IMR-90 (cell line): ENCODE measurements at regions of chrX and their contacts with region 1.

Region 1: DNA sequence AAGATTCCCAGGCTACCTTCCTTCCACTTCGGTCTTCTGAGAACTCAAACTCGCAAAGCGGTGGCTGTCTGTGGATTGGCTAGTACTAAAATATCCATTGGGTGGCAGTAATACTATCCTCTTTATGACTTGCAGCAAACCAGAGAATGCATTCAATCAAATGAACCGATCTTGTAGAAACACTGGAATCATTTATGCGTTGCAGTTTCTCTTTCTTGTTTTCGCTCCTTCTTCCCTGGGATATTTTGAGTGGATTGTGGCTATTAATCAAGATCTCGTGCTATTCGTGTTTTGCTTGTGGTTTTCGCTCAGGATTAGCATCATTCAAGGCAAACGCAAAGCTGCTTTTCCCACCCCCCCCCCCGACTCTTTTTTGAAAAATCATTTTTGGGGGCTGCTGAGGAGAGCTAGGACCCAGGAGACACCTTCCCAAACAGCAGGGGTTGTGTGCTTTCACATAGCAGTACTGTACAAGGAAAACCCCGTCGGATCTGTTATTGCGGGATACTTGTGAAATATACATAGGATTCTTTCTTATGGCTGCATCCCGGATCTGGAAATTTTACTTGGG is at the start of gene IL1RAPL1:
- DNase-seq: peak; percentile 81
- ATAC-seq: peak; percentile 77
- H3K4me3 ChIP-seq: peak within 1 kb of the TSS; percentile 63
- H3K27ac ChIP-seq: peak within 1 kb of the TSS; percentile 58; the same call in 1 of the 2 replicates
- H3K4me1 ChIP-seq: no peaks in the 10 kb centered on the region
- H3K27me3 ChIP-seq: no peaks in the 10 kb centered on the region
- CTCF ChIP-seq: peak; percentile 39
- POLR2A ChIP-seq: no peak
- RAD21 ChIP-seq: peak; percentile 36
- total RNA-seq, gene IL1RAPL1: 9.0 and 12.5 TPM in 2 replicates

Region 2: GRCh38 chrX:27680726-27681125 is 906.3 kb before region 1 on chrX:
- CTCF ChIA-PET with region 1: no interaction called
- POLR2A ChIA-PET with region 1: no interaction called
- dilution Hi-C with region 1: no loop called
- in situ Hi-C with region 1: no loop called
- intact Hi-C with region 1: loop called (anchors 2 kb)
- DNase-seq: peak; percentile 56
- ATAC-seq: peak; percentile 85
- H3K4me3 ChIP-seq: no peak overlapping the region
- H3K27ac ChIP-seq: no peak overlapping the region
- H3K4me1 ChIP-seq: no peaks in the 10 kb centered on the region
- H3K27me3 ChIP-seq: no peaks in the 10 kb centered on the region
- CTCF ChIP-seq: no peak
- POLR2A ChIP-seq: no peak
- RAD21 ChIP-seq: no peak

Region 3: GRCh38 chrX:28223991-28224390 is 363.1 kb before region 1 on chrX:
- CTCF ChIA-PET with region 1: no interaction called
- POLR2A ChIA-PET with region 1: no interaction called
- dilution Hi-C with region 1: no loop called
- in situ Hi-C with region 1: no loop called
- intact Hi-C with region 1: loop called (anchors 5 kb)
- DNase-seq: no peak
- ATAC-seq: no peak
- H3K4me3 ChIP-seq: no peak overlapping the region
- H3K27ac ChIP-seq: no peak overlapping the region
- H3K4me1 ChIP-seq: no peaks in the 10 kb centered on the region
- H3K27me3 ChIP-seq: no peaks in the 10 kb centered on the region
- CTCF ChIP-seq: no peak
- POLR2A ChIP-seq: no peak
- RAD21 ChIP-seq: no peak

Region 4: DNA sequence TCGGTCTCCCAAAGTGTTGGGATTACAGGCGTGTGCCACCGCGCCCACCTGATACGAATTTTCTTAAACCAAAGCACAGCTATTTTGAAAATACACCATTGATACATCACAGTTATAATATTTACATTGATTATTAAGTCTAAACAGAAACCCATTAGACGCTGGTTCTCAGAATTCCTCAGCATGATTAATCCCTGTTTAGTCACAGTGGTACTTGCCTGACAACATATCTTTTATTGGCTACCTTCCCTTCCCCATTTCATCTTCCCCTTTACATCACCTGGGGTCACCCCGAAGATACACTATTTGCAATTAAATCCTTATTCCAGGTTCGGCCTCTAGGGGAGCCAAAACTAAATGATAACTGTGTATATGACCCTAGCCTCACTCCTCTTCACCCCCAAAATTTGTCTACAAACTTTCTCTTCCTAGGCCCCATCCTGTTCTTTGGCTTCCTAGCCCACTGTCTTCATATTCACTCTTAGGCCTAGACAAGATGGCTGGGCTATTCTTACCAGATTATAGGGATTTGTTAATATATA is 36.7 kb before region 1 on chrX:
- CTCF ChIA-PET with region 1: no interaction called
- POLR2A ChIA-PET with region 1: no interaction called
- dilution Hi-C with region 1: no loop called
- in situ Hi-C with region 1: no loop called
- intact Hi-C with region 1: no loop called
- DNase-seq: no peak
- ATAC-seq: no peak
- H3K4me3 ChIP-seq: no peak overlapping the region
- H3K27ac ChIP-seq: no peak overlapping the region
- H3K4me1 ChIP-seq: no peaks in the 10 kb centered on the region
- H3K27me3 ChIP-seq: no peaks in the 10 kb centered on the region
- CTCF ChIP-seq: no peak
- POLR2A ChIP-seq: no peak
- RAD21 ChIP-seq: no peak

Region 5: DNA sequence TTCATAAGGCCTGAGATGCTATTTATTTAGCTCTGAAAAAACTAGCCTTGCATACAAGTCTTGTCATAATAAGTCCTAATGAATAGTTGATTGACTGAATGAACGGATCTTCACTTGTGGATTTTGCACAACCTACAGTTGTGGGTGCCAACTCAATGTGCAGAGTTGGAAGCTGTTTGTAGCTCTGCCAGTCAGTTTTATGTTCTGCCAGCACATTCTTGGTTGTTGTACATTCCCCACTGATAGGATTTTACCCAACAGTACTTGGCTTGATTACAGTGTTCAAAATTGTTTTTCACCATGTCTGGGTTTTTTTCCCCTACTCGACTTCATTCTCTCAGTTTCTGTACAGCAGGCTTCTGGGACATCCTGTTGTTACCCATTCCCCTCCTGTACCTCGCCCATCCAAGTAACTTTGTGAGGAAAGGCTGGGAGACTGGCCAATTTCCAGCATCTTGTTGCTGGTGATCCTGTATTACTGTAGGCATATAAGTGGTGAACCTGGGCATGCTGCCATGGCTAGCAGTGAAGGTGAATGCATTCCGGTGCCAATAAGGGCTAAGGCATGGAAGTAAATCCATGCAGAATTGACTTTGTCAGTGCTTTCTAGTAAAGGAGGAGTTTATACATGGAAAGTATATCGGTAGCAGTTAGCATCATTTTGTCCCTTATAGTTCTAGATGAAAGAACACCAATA is 23.0 kb after region 1 on chrX:
- CTCF ChIA-PET with region 1: no interaction called
- POLR2A ChIA-PET with region 1: no interaction called
- dilution Hi-C with region 1: no loop called
- in situ Hi-C with region 1: no loop called
- intact Hi-C with region 1: no loop called
- DNase-seq: no peak
- ATAC-seq: no peak
- H3K4me3 ChIP-seq: no peak overlapping the region
- H3K27ac ChIP-seq: no peak overlapping the region
- H3K4me1 ChIP-seq: no peaks in the 10 kb centered on the region
- H3K27me3 ChIP-seq: no peaks in the 10 kb centered on the region
- CTCF ChIP-seq: no peak
- POLR2A ChIP-seq: no peak
- RAD21 ChIP-seq: no peak

Region 6: DNA sequence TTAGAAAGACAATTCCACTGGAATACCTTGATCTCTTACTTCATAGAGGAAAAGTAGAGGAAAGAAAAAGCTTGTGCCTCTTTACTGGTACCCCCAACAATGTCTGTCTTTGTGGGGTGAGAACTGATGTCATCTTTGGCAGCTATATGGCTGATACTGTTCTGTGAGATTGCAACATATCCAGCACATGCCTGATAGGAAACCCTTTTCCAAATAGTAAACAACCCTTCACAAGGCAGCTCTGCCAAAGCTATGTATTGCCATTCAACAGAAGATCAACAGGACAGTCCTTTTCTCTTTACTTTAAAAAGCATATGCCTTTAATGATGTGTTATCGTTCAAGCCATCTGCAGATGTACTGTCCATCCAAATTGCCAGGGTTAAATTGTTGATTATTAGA is 106.0 kb after region 1 on chrX:
- CTCF ChIA-PET with region 1: no interaction called
- POLR2A ChIA-PET with region 1: no interaction called
- dilution Hi-C with region 1: no loop called
- in situ Hi-C with region 1: no loop called
- intact Hi-C with region 1: no loop called
- DNase-seq: no peak
- ATAC-seq: no peak
- H3K4me3 ChIP-seq: no peak overlapping the region
- H3K27ac ChIP-seq: no peak overlapping the region
- H3K4me1 ChIP-seq: no peaks in the 10 kb centered on the region
- H3K27me3 ChIP-seq: no peaks in the 10 kb centered on the region
- CTCF ChIP-seq: no peak
- POLR2A ChIP-seq: no peak
- RAD21 ChIP-seq: no peak

Region 7: GRCh38 chrX:28802625-28803024 is 215.6 kb after region 1 on chrX:
- CTCF ChIA-PET with region 1: no interaction called
- POLR2A ChIA-PET with region 1: no interaction called
- dilution Hi-C with region 1: no loop called
- in situ Hi-C with region 1: no loop called
- intact Hi-C with region 1: loop called (anchors 2 kb)
- DNase-seq: no peak
- ATAC-seq: no peak
- H3K4me3 ChIP-seq: no peak overlapping the region
- H3K27ac ChIP-seq: no peak overlapping the region
- H3K4me1 ChIP-seq: no peaks in the 10 kb centered on the region
- H3K27me3 ChIP-seq: no peaks in the 10 kb centered on the region
- CTCF ChIP-seq: 0 out of 2 replicates have a peak, but pooled peaks have one; percentile 15
- POLR2A ChIP-seq: no peak
- RAD21 ChIP-seq: no peak

Region 8: DNA sequence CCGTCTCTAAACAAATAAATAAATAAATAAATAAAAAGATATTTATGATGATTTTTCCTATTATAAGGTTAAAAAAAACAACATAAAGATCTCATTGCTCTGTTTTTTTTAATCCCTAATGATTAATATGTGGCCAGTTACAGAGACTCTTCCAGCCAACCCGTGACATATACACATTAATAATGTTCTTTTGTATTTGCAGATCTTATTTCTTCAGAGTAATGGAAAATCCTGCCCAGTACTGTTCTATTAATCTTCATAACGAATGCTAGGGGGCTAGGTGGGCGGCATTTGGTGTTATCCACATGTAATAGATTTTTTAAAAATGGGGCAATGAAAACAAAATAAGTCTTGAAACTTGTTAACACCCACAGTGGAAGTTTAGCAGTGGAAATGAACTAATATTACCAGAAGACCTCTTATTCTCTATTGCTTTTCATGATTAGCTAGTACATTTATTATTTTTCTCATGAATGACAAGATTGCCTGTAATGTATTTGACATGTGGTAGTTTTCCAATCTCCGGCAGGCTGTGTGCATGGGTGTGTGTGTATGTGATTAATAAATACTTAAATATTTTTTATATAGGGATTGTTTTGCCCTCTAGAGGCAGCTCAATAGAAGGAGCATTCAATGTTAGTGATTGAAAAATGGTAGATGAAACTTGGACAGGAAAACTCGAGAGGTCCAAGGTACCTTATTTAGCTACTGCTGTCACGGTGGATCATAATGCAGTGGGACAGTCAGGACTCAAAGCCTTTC is 457.5 kb after region 1 on chrX:
- CTCF ChIA-PET with region 1: no interaction called
- POLR2A ChIA-PET with region 1: no interaction called
- dilution Hi-C with region 1: no loop called
- in situ Hi-C with region 1: no loop called
- intact Hi-C with region 1: loop called (anchors 5 kb)
- DNase-seq: peak; percentile 26
- ATAC-seq: peak; percentile 57; the same call in 1 of the 2 replicates
- H3K4me3 ChIP-seq: no peak overlapping the region
- H3K27ac ChIP-seq: no peak overlapping the region
- H3K4me1 ChIP-seq: no peaks in the 10 kb centered on the region
- H3K27me3 ChIP-seq: no peaks in the 10 kb centered on the region
- CTCF ChIP-seq: peak; percentile 43
- POLR2A ChIP-seq: no peak
- RAD21 ChIP-seq: peak; percentile 42

Region 9: GRCh38 chrX:29231800-29232199 is 644.7 kb after region 1 on chrX:
- CTCF ChIA-PET with region 1: no interaction called
- POLR2A ChIA-PET with region 1: no interaction called
- dilution Hi-C with region 1: no loop called
- in situ Hi-C with region 1: no loop called
- intact Hi-C with region 1: loop called (anchors 5 kb)
- DNase-seq: peak; percentile 6
- ATAC-seq: peak; percentile 71; the same call in 1 of the 2 replicates
- H3K4me3 ChIP-seq: no peak overlapping the region
- H3K27ac ChIP-seq: no peak overlapping the region
- H3K4me1 ChIP-seq: no peaks in the 10 kb centered on the region
- H3K27me3 ChIP-seq: no peaks in the 10 kb centered on the region
- CTCF ChIP-seq: peak; percentile 46
- POLR2A ChIP-seq: no peak
- RAD21 ChIP-seq: peak; percentile 42

Region 10: GRCh38 chrX:30060718-30061117 is 1473.7 kb after region 1 on chrX:
- CTCF ChIA-PET with region 1: no interaction called
- POLR2A ChIA-PET with region 1: no interaction called
- dilution Hi-C with region 1: no loop called
- in situ Hi-C with region 1: loop called (anchors 25 kb)
- intact Hi-C with region 1: loop called (anchors 5 kb)
- DNase-seq: peak; percentile 21
- ATAC-seq: peak; percentile 72; the same call in 1 of the 2 replicates
- H3K4me3 ChIP-seq: no peak overlapping the region
- H3K27ac ChIP-seq: no peak overlapping the region
- H3K4me1 ChIP-seq: no peaks in the 10 kb centered on the region
- H3K27me3 ChIP-seq: no peaks in the 10 kb centered on the region
- CTCF ChIP-seq: peak; percentile 52
- POLR2A ChIP-seq: no peak
- RAD21 ChIP-seq: peak; percentile 60